ENCODE measurements at regions of chrX and their contacts with region 1.

Region 1: GRCh38 chrX:118839334-118839958 is 15.8 kb downstream of the ZCCHC12 start:
- H3K4me3 ChIP-seq: peak overlapping the region; percentile 25
- H3K27ac ChIP-seq: no peak overlapping the region; the same call in 1 of the 2 replicates
- H3K4me1 ChIP-seq: no peaks in the 10 kb centered on the region
- CTCF ChIP-seq: no peak

Region 2: DNA sequence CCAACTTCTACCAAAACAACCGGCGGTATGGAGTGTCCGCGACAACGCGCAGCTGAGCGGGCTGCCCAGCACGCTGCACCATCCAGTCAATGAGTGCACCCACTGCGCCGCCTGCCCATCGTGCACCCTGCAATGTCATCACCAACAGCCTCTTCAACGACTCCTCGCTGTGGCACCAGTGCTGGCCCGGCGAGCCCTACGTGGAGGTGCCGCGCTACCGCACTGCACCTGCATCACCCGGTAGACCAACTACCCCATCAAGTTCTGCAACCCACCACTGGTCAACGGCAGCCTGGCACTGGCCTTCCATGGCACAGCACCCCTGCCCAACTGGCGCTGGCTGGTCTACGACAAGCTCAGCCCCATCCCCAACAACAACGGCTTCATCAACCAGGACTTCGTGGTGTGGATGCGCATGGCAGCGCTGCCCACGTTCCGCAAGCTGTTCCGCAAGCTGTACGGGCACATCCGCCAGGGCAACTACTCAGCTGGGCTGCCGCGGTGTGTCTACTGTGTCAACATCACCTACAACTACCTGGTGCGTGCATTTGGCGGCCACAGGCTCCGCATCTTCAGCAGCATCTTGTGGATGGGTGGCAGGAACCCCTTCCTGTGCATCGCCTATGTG is 69.2 kb before region 1 on chrX:
- CTCF ChIA-PET with region 1: no interaction called
- POLR2A ChIA-PET with region 1: no interaction called
- H3K4me3 ChIP-seq: no peak overlapping the region
- H3K27ac ChIP-seq: no peak overlapping the region
- H3K4me1 ChIP-seq: no peaks in the 10 kb centered on the region
- CTCF ChIP-seq: no peak

Region 3: GRCh38 chrX:118823263-118824172 is 15.9 kb before region 1 on chrX and contains the start of gene ZCCHC12:
- CTCF ChIA-PET with region 1: interaction called, 27 read pairs
- POLR2A ChIA-PET with region 1: interaction called, 4 read pairs
- H3K4me3 ChIP-seq: peak within 1 kb of the TSS; percentile 39
- H3K27ac ChIP-seq: no peak within 1 kb of the TSS
- H3K4me1 ChIP-seq: no peaks in the 10 kb centered on the region
- CTCF ChIP-seq: peak; percentile 43; the same call in 1 of the 2 replicates

Region 4: DNA sequence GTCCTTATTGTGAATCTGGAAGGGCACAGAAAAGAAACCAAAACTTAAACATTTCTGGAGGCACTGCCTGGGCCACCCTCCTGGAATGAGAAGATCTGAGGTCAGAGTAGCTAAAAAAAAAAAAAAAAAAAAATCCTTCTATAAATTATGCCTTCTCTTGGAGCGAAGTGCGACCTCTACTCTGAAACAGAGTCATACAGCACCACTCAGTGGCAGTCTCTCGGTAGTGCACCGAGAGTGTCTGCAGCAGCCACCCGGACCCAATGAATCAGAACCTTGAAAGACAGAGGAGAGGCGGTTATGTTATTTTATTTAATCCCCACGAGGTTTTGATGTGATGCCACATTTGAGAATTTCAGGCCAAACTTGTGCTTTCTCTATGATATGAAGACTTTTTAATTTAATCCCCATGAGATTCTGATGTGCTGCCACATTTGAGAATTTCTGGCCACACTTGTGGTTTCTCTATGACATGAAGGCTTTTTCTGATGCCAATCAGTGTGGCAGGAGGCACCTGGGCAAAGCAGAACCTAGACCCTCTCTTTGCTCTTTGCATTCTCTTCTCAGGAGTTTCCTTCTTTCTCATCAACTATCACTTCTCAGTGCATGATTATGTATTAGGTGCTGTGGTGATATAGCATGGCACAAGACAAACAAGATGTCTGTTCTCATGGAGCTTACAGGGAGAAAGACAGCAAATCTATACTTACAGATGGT is 227.7 kb after region 1 on chrX:
- CTCF ChIA-PET with region 1: interaction called, 15 read pairs
- POLR2A ChIA-PET with region 1: no interaction called
- H3K4me3 ChIP-seq: no peak overlapping the region
- H3K27ac ChIP-seq: no peak overlapping the region
- H3K4me1 ChIP-seq: no peaks in the 10 kb centered on the region
- CTCF ChIP-seq: peak; percentile 43; the same call in 1 of the 2 replicates